CD4-positive, alpha-beta memory T cell (primary cell): ENCODE measurements at regions of chr2 and their contacts with region 1.

Region 1: GRCh38 chr2:207710814-207711740 is at the start of gene CCNYL1:
- DNase-seq: peak; percentile 96 to 99 (median 98)
- H3K4me3 ChIP-seq: peak within 1 kb of the TSS; percentile 70 to 88
- H3K4me3 Mint-ChIP-seq: peak within 1 kb of the TSS; percentile 90 to 98 (median 96)
- H3K27ac ChIP-seq: peak within 1 kb of the TSS; percentile 73
- H3K27ac Mint-ChIP-seq: peak within 1 kb of the TSS; percentile 92 to 96 (median 94)
- H3K4me1 ChIP-seq: peaks cover 20% of the 10 kb centered on the region
- H3K4me1 Mint-ChIP-seq: peaks cover 14 to 37% (median 21%) of the 10 kb centered on the region in 4 donors
- H3K27me3 ChIP-seq: no peaks in the 10 kb centered on the region
- H3K27me3 Mint-ChIP-seq: peaks cover 0 to 1% of the 10 kb centered on the region in 2 donors
- total RNA-seq, gene CCNYL1: 9.7 to 10.5 TPM

Region 2: GRCh38 chr2:206159346-206160124 is 1551.5 kb before region 1 on chr2 and contains the starts of genes EEF1B2 and NDUFS1:
- CTCF ChIA-PET with region 1: no interaction called
- POLR2A ChIA-PET with region 1: no interaction called
- intact Hi-C with region 1: loop called (anchors 5 kb)
- DNase-seq: peak; percentile 96 to 97 (median 97)
- H3K4me3 ChIP-seq: peak within 1 kb of the TSS; percentile 69 to 78
- H3K4me3 Mint-ChIP-seq: peak within 1 kb of the TSS; percentile 97 to 100 (median 100)
- H3K27ac ChIP-seq: peak within 1 kb of the TSS; percentile 94
- H3K27ac Mint-ChIP-seq: peak within 1 kb of the TSS; percentile 98 to 100 (median 99)
- H3K4me1 ChIP-seq: peaks cover 47% of the 10 kb centered on the region
- H3K4me1 Mint-ChIP-seq: peaks cover 38 to 71% (median 56%) of the 10 kb centered on the region in 4 donors
- H3K27me3 ChIP-seq: no peaks in the 10 kb centered on the region
- H3K27me3 Mint-ChIP-seq: no peaks in the 10 kb centered on the region
- total RNA-seq, gene EEF1B2: 947 to 1,026 TPM
- total RNA-seq, gene NDUFS1: 53.4 to 57.6 TPM

Region 3: GRCh38 chr2:207692206-207693065 is 18.6 kb before region 1 on chr2:
- CTCF ChIA-PET with region 1: interaction called, 17 read pairs
- POLR2A ChIA-PET with region 1: no interaction called
- intact Hi-C with region 1: no loop called
- DNase-seq: peak; percentile 34 to 45 (median 37)
- H3K4me3 ChIP-seq: no peak overlapping the region
- H3K4me3 Mint-ChIP-seq: no peak overlapping the region
- H3K27ac ChIP-seq: no peak overlapping the region
- H3K27ac Mint-ChIP-seq: no peak overlapping the region
- H3K4me1 ChIP-seq: no peaks in the 10 kb centered on the region
- H3K4me1 Mint-ChIP-seq: peaks cover 0 to 5% (median 2%) of the 10 kb centered on the region in 4 donors
- H3K27me3 ChIP-seq: no peaks in the 10 kb centered on the region
- H3K27me3 Mint-ChIP-seq: no peaks in the 10 kb centered on the region

Region 4: DNA sequence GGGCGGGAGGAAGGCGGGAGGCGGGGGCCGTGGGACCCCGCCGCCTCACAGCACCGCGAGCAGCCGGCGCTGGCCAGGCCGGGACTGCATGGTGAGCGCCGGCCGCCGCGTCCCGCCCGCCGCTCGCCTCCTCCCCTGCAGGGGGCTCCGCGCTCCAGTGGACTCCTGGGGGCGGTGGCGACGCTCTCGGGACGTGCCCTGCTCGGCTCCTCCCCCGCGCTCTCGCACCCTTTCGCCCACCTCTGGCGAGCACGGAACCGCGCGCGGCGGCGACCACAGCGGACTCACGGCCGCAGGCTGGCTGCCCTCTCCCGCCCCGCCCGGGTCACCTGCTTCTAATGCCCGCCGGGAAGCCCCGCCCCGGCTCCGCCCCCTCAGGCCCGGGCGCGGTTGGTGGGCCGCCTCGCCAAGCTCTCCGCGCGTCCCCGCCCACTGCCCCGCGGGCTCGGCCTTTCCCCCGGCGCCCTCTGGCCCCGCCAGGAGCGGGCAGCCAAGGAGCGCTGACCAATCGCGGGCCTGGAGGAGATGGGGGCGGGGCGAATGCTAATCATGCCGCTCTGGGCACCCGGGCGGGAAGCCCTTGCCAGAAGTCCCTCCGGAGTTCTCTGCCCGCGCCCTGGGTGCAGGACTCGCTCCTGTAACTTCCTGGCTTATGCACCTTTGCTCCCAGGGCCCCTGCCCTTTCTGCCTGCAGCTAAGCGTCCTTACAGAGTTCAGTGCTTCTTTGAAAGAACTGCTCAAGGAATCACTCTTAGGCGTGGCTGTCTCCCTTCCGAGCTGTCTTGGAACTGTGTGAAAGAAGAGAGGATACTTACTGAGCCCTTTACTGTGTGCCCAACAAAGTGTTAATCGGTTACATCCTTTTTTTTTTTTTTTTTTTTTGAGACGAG is 58.8 kb after region 1 on chr2 and contains the start of gene FZD5:
- CTCF ChIA-PET with region 1: no interaction called
- POLR2A ChIA-PET with region 1: interaction called, 4 read pairs
- intact Hi-C with region 1: loop called (anchors 1 kb)
- DNase-seq: peak; percentile 49 to 74 (median 53)
- H3K4me3 ChIP-seq: peak within 1 kb of the TSS; percentile 36 to 70
- H3K4me3 Mint-ChIP-seq: peak within 1 kb of the TSS; percentile 88 to 97 (median 96)
- H3K27ac ChIP-seq: no peak within 1 kb of the TSS
- H3K27ac Mint-ChIP-seq: peak within 1 kb of the TSS in 6 of 7 donors; percentile 57 to 86 (median 74)
- H3K4me1 ChIP-seq: peaks cover 41% of the 10 kb centered on the region
- H3K4me1 Mint-ChIP-seq: peaks cover 13 to 40% (median 22%) of the 10 kb centered on the region in 4 donors
- H3K27me3 ChIP-seq: peaks cover 9% of the 10 kb centered on the region
- H3K27me3 Mint-ChIP-seq: peaks cover 10 to 16% of the 10 kb centered on the region in 2 donors
- total RNA-seq, gene FZD5: 0.33 to 0.38 TPM

Region 5: GRCh38 chr2:208254871-208255556 is 543.9 kb after region 1 on chr2 and contains the start of gene IDH1:
- CTCF ChIA-PET with region 1: no interaction called
- POLR2A ChIA-PET with region 1: interaction called, 5 read pairs
- intact Hi-C with region 1: loop called (anchors 5 kb)
- DNase-seq: peak; percentile 85 to 92 (median 88)
- H3K4me3 ChIP-seq: peak within 1 kb of the TSS; percentile 91 to 92
- H3K4me3 Mint-ChIP-seq: peak within 1 kb of the TSS; percentile 93 to 100 (median 98)
- H3K27ac ChIP-seq: peak within 1 kb of the TSS; percentile 43
- H3K27ac Mint-ChIP-seq: peak within 1 kb of the TSS; percentile 79 to 94 (median 86)
- H3K4me1 ChIP-seq: peaks cover 14% of the 10 kb centered on the region
- H3K4me1 Mint-ChIP-seq: peaks cover 12 to 32% (median 18%) of the 10 kb centered on the region in 4 donors
- H3K27me3 ChIP-seq: no peaks in the 10 kb centered on the region
- H3K27me3 Mint-ChIP-seq: no peaks in the 10 kb centered on the region
- total RNA-seq, gene IDH1: 25.6 to 25.9 TPM